ENCODE measurements at regions of chr9 and their contacts with region 1.

Region 1: DNA sequence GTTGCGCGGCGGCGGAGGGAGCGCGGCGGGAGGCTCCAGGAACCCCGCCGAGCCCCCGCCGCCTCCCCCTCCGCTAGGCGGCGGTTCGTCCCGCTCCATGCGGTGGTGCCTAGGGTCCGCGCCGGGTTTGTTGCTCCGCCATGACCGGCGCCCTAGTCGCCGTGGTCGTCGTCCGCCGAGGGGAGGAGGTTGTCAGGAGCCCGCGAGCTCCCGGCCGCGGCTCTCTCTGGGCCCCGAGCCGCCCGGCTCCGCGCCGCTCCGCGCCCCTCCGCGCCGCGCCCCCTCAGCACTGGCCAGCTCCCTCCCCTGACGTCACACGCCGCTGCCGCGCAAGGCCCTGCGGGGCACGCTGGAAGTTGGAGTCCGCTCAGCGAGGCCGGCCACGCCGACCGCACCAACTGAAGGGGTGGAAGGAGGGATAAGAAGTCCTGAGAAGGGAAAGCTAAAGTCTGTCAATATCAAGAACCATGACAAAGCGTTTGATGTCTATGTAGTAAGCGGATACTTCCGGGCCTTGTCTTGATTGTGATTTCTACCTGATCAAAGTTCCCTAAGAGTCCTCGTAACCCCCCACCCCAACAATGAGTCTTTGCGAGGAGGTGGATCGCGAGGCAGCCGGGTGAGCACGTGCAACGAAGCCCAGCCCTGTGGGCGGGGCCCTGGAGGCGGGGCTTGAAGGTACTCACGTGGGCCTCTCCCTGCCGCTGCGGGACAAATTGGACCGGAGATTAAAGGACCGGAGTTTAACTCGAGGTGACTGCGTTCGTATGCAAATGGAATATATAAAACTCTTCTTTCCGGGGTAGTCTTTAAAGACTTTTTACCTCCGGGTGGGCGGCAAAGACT is at the start of gene NR6A1:
- DNase-seq: peak; percentile 96
- ATAC-seq: peak; percentile 93
- H3K4me3 Mint-ChIP-seq: peak within 1 kb of the TSS; percentile 78
- H3K27ac Mint-ChIP-seq: peak within 1 kb of the TSS; percentile 82
- H3K4me1 Mint-ChIP-seq: peaks cover 45% of the 10 kb centered on the region
- H3K27me3 Mint-ChIP-seq: peaks cover 66% of the 10 kb centered on the region
- total RNA-seq, gene NR6A1: 0.44 to 1.2 TPM

Region 2: GRCh38 chr9:124818431-124819281 is 47.4 kb after region 1 on chr9:
- CTCF ChIA-PET with region 1: interaction called, 11 read pairs
- DNase-seq: peak; percentile 70
- ATAC-seq: peak; percentile 82
- H3K4me3 Mint-ChIP-seq: no peak overlapping the region
- H3K27ac Mint-ChIP-seq: no peak overlapping the region
- H3K4me1 Mint-ChIP-seq: peaks cover 18% of the 10 kb centered on the region
- H3K27me3 Mint-ChIP-seq: peaks cover 17% of the 10 kb centered on the region

Region 3: DNA sequence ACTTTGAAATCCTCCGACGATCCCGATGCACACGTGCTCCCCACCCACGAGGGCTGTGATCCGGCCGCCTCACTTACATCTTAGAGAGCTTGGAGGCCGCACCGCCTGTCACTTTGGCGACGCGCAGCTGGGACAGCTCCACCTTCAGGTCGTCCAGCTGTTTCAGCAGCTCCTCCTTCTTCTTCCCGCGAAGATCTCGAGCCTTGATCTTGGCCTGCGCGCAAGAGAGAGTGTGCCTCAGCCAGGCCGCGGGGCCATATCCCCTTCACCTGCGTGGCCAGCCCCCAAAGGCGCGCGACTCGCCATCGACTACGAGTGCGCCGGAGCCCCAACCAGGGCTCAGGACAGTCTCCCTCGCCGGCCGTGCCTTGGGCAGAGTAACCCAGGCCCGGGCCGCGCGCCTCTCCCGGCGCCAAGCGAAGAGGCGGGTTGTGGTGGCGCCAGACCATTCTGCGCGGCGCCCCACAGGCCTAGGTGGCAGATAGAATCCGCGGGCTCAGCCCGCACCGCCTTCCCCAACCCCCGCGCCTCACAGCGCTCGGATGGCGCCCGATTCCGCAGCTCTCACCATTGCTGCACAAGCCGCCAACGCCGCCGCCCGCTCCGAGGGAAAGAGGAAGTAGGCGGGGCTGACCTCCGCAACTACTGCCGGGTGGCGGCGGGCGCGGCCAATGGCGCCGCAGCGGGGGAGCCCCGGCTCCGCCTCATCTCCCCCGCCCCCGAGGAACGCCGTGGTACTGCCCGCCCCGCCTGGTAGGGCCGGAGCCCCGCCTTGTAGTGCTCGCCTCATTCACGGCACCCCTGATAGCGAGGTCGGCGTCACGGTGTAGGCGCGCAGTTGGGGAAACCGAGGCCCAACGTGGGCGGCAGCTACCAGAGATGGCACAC is 90.3 kb after region 1 on chr9 and contains the starts of genes ARPC5L and RPL35:
- CTCF ChIA-PET with region 1: interaction called, 380 read pairs
- DNase-seq: peak; percentile 97
- ATAC-seq: peak; percentile 97
- H3K4me3 Mint-ChIP-seq: peak within 1 kb of the TSS; percentile 81
- H3K27ac Mint-ChIP-seq: peak within 1 kb of the TSS; percentile 91
- H3K4me1 Mint-ChIP-seq: peaks cover 41% of the 10 kb centered on the region
- H3K27me3 Mint-ChIP-seq: no peaks in the 10 kb centered on the region
- total RNA-seq, gene ARPC5L: 79.1 to 90.6 TPM
- total RNA-seq, gene RPL35: 1,421 to 1,557 TPM

Region 4: DNA sequence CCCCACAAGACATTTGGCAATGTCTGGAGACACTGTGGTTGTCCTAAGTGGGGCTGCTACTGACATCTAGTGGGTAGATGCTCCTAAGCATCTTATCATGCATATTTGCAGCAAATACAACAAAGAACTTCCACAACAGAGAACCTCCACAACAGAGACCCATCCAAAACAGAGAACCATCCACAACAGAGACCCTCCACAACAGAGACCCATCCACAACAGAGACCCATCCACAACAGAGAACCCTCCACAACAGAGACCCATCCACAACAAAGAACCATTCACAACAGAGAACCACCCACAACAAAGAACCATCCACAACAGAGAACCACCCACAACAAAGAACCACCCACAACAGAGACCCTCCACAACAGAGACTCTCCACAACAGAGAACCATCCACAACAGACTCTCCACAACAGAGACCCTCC is 123.5 kb after region 1 on chr9:
- CTCF ChIA-PET with region 1: interaction called, 24 read pairs
- DNase-seq: peak; percentile 66
- ATAC-seq: peak; percentile 83
- H3K4me3 Mint-ChIP-seq: no peak overlapping the region
- H3K27ac Mint-ChIP-seq: no peak overlapping the region
- H3K4me1 Mint-ChIP-seq: no peaks in the 10 kb centered on the region
- H3K27me3 Mint-ChIP-seq: no peaks in the 10 kb centered on the region